Endothelial cell of umbilical vein (primary cell): ENCODE measurements at regions of chr7 and their contacts with region 1.

Region 1: GRCh38 chr7:53094827-53095226 is 59.4 kb downstream of the POM121L12 start:
- DNase-seq: peak; percentile 21
- H3K4me3 ChIP-seq: no peak overlapping the region
- H3K27ac ChIP-seq: peak overlapping the region; percentile 62
- H3K4me1 ChIP-seq: peaks cover 22% of the 10 kb centered on the region
- H3K27me3 ChIP-seq: no peaks in the 10 kb centered on the region
- CTCF ChIP-seq: no peak
- POLR2A ChIP-seq: no peak

Region 2: GRCh38 chr7:52669027-52669426 is 425.8 kb before region 1 on chr7:
- CTCF ChIA-PET with region 1: no interaction called
- POLR2A ChIA-PET with region 1: no interaction called
- dilution Hi-C with region 1: no loop called
- intact Hi-C with region 1: loop called (anchors 10 kb)
- DNase-seq: no peak
- H3K4me3 ChIP-seq: no peak overlapping the region
- H3K27ac ChIP-seq: no peak overlapping the region
- H3K4me1 ChIP-seq: peaks cover 2% of the 10 kb centered on the region
- H3K27me3 ChIP-seq: no peaks in the 10 kb centered on the region
- CTCF ChIP-seq: no peak
- POLR2A ChIP-seq: no peak

Region 3: GRCh38 chr7:52838981-52839411 is 255.8 kb before region 1 on chr7:
- CTCF ChIA-PET with region 1: no interaction called
- POLR2A ChIA-PET with region 1: no interaction called
- dilution Hi-C with region 1: no loop called
- intact Hi-C with region 1: loop called (anchors 1 kb)
- DNase-seq: peak; percentile 94
- H3K4me3 ChIP-seq: peak overlapping the region in 1 of 3 experiments; percentile 35
- H3K27ac ChIP-seq: peak overlapping the region; percentile 93
- H3K4me1 ChIP-seq: peaks cover 20% of the 10 kb centered on the region
- H3K27me3 ChIP-seq: no peaks in the 10 kb centered on the region
- CTCF ChIP-seq: no peak
- POLR2A ChIP-seq: no peak

Region 4: GRCh38 chr7:52959336-52959735 is 135.5 kb before region 1 on chr7:
- CTCF ChIA-PET with region 1: interaction called, 3 read pairs
- POLR2A ChIA-PET with region 1: no interaction called
- dilution Hi-C with region 1: no loop called
- intact Hi-C with region 1: loop called (anchors 5 kb)
- DNase-seq: peak; percentile 25
- H3K4me3 ChIP-seq: no peak overlapping the region
- H3K27ac ChIP-seq: peak overlapping the region; percentile 32
- H3K4me1 ChIP-seq: peaks cover 39% of the 10 kb centered on the region
- H3K27me3 ChIP-seq: no peaks in the 10 kb centered on the region
- CTCF ChIP-seq: no peak
- POLR2A ChIP-seq: no peak

Region 5: DNA sequence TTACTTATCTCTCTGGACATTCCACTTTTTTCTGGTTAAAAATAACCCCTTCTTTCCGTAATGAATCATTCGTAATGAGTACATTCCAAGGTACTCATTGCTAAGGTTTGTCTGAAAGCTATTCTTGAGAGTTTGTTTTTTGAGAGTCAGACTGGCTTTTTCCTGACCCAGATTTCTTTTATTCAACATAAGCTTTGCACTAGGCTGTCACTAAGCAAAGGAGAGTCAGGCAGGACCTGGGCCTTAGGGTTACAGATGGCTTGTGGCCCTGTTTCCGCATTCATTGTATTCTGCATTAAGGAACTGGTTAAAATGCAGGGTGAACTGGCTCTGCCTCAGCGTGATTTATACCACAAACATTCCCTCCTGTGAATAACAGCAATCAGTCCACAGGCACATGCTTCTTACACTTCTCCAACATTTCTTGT is 24.7 kb after region 1 on chr7:
- CTCF ChIA-PET with region 1: interaction called, 4 read pairs
- POLR2A ChIA-PET with region 1: no interaction called
- dilution Hi-C with region 1: no loop called
- intact Hi-C with region 1: loop called (anchors 1 kb)
- DNase-seq: peak; percentile 99
- H3K4me3 ChIP-seq: no peak overlapping the region
- H3K27ac ChIP-seq: peak overlapping the region; percentile 95
- H3K4me1 ChIP-seq: peaks cover 27% of the 10 kb centered on the region
- H3K27me3 ChIP-seq: no peaks in the 10 kb centered on the region
- CTCF ChIP-seq: no peak
- POLR2A ChIP-seq: no peak